Activated CD8-positive, alpha-beta T cell treated with anti-CD3 and anti-CD28 coated beads for 36 hours (primary cell): ENCODE measurements at regions of chr14 and their contacts with region 1.

Region 1: GRCh38 chr14:81187832-81188522 is 32.8 kb downstream of the GTF2A1 start:
- DNase-seq: no peak
- ATAC-seq: peak; percentile 60
- H3K4me3 Mint-ChIP-seq: no peak overlapping the region
- H3K27ac Mint-ChIP-seq: peak overlapping the region; percentile 20
- H3K4me1 Mint-ChIP-seq: peaks cover 44% of the 10 kb centered on the region
- H3K27me3 Mint-ChIP-seq: no peaks in the 10 kb centered on the region
- CTCF ChIP-seq: no peak

Region 2: GRCh38 chr14:80839743-80840142 is 348.2 kb before region 1 on chr14:
- CTCF ChIA-PET with region 1: no interaction called
- POLR2A ChIA-PET with region 1: no interaction called
- intact Hi-C with region 1: no loop called
- DNase-seq: no peak
- ATAC-seq: no peak
- H3K4me3 Mint-ChIP-seq: no peak overlapping the region
- H3K27ac Mint-ChIP-seq: no peak overlapping the region
- H3K4me1 Mint-ChIP-seq: no peaks in the 10 kb centered on the region
- H3K27me3 Mint-ChIP-seq: no peaks in the 10 kb centered on the region
- CTCF ChIP-seq: no peak

Region 3: DNA sequence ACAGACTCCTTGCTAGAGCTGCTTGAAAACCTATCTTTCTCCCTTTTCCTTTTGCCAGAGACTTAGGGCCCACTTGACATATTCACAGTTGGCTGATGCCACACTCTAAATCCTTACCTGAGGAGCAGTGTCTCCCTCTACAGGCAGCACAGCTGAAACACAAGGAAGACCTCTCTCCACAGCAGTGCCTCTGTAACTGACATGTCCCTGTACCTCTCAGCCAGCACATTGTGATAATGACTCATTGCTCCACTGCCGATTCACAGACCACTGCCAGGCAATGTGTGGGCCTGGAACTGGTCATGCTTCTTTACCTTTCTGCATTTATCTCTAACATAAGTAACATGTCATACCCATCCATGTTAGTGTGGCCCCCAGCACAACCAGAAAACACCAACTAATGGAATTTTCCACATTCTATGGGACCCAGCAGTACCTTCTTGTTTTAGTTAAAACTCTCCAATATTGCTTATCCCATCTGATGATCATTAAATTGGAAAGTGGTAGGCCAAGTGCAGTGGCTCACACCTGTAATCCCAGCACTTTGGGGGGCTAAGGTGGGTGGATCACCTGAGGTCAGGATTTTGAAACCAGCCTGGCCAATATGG is 23.7 kb before region 1 on chr14:
- CTCF ChIA-PET with region 1: interaction called, 10 read pairs
- POLR2A ChIA-PET with region 1: no interaction called
- intact Hi-C with region 1: no loop called
- DNase-seq: peak; percentile 83
- ATAC-seq: peak; percentile 100
- H3K4me3 Mint-ChIP-seq: no peak overlapping the region
- H3K27ac Mint-ChIP-seq: no peak overlapping the region
- H3K4me1 Mint-ChIP-seq: peaks cover 14% of the 10 kb centered on the region
- H3K27me3 Mint-ChIP-seq: no peaks in the 10 kb centered on the region
- CTCF ChIP-seq: peak; percentile 74